Spleen (tissue), 13 donors: ENCODE measurements at regions of chr16 and their contacts with region 1.

Region 1: DNA sequence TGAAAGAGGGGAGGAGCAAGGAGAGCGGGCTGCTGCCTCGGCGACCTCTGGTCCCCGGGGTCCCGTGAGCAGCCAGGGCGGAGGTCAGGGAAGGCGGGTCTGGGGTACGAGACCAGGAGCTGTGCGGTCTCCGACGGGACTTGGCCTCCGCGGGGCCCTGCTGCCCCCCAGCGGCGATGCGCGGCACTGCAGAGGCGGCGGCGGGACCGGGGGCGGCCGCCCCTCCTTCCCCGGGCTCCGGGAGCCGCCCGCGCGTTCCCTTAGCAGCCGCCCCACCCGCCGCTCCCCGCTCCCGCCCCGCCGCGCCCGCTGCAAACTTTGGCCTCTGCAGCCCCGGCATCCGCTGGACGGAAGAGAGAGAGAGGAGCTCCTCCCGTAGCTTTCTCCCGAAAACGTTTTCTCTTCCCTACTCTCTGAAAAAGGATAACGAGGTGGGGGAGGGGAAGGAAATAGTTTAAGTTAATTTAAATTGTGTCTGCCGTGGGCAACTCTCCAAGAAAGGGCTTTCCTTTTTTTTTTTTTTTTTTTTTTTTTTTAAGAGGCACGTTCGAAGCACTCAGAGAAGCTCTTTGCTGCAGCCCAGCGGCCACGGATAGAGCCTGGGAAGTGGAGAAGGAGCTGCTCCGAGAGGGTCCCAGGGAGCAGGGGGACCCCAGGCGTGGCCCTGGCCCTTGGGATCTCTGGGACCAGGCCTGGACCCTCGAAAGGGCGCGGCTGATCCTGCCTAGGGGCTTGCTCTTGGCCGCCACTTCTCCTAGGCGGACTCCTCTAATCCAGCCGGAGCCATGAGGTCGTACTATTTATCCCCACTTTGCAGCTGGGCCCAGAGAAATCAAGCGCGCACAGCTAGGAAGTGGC is 43.2 kb downstream of the C16orf82 start:
- DNase-seq: peak; percentile 93
- H3K4me3 ChIP-seq: peak overlapping the region in 5 of 8 donors; percentile 3 to 63 (median 30)
- H3K27ac ChIP-seq: peak overlapping the region in 7 of 8 donors; percentile 29 to 68 (median 62)
- H3K4me1 ChIP-seq: peaks cover 9 to 57% (median 33%) of the 10 kb centered on the region in 6 donors
- H3K27me3 ChIP-seq: peaks cover 0 to 10% (median 0%) of the 10 kb centered on the region in 7 donors
- CTCF ChIP-seq: peak; percentile 34 to 99 (median 94)
- POLR2A ChIP-seq: no peak

Region 2: DNA sequence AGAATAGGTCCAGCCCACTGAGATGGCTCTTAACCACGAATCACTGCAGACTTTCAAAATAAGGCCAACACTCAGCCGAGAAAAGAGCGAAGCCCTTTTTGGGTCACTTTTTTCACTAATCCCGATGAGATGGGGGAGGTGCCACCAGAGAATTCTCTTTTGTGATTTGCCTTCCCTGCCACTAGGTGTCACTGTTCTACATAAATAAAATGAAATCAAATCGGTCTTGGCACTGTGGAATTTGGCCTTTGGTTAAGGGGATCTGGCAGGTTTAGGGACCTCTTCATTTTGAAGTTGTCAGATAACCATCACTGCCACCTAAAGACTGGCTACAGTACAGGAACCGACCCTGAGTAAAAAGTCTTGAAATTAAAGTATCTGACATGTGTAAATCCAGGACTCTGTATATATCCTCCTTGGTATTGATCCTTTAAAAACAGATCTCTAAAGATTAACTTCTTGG is 1271.1 kb before region 1 on chr16:
- intact Hi-C with region 1: loop called (anchors 10 kb)
- DNase-seq: no peak
- H3K4me3 ChIP-seq: no peak overlapping the region
- H3K27ac ChIP-seq: no peak overlapping the region
- H3K4me1 ChIP-seq: peaks cover 0 to 8% (median 6%) of the 10 kb centered on the region in 6 donors
- H3K27me3 ChIP-seq: peaks cover 0 to 30% (median 0%) of the 10 kb centered on the region in 7 donors
- CTCF ChIP-seq: peak; percentile 8 to 80 (median 63)
- POLR2A ChIP-seq: no peak

Region 3: DNA sequence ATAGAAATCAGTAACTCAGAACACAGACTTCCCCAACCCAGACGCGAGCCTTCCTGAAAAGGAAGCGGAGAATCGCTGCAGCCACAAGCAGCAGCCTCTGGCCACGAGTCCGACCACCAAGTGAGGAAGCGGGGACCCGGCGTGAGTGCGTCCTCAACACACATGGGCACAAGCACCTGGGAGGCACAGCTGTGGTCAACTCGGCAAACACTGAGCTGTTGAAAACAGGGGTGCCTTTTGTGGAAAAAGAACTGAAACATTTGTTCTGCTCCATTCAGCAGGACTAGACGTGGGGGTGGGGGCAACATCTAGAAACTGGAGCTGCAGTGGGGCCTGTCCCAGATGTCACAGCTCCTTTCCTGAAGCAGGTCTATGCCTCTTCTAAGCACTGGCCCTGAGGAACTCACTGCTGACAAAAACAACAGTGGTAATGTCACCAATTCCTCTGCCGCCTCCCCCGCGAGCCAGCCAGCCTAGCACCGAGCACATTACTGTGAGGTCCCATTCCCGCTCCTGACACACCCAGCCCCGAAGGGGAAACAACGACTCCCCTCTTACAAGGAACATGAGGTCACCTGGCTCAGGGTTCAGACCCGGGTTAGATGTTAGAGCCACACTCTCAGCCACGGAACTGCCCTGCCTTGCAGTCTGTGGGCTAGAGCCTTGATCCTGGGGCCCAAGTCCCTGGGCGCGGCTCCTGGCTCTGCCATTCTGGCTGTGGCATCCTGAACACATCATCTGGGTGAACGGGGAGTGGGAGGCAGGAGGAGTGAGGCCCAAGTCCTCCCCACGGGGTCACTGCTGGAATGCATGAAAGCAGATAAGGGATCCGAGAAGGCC is 122.4 kb after region 1 on chr16:
- intact Hi-C with region 1: no loop called
- DNase-seq: peak; percentile 87
- H3K4me3 ChIP-seq: peak overlapping the region in 1 of 8 donors; percentile 12
- H3K27ac ChIP-seq: peak overlapping the region; percentile 15 to 94 (median 76)
- H3K4me1 ChIP-seq: peaks cover 62 to 98% (median 84%) of the 10 kb centered on the region in 6 donors
- H3K27me3 ChIP-seq: no peaks in the 10 kb centered on the region
- CTCF ChIP-seq: no peak
- POLR2A ChIP-seq: no peak

Region 4: DNA sequence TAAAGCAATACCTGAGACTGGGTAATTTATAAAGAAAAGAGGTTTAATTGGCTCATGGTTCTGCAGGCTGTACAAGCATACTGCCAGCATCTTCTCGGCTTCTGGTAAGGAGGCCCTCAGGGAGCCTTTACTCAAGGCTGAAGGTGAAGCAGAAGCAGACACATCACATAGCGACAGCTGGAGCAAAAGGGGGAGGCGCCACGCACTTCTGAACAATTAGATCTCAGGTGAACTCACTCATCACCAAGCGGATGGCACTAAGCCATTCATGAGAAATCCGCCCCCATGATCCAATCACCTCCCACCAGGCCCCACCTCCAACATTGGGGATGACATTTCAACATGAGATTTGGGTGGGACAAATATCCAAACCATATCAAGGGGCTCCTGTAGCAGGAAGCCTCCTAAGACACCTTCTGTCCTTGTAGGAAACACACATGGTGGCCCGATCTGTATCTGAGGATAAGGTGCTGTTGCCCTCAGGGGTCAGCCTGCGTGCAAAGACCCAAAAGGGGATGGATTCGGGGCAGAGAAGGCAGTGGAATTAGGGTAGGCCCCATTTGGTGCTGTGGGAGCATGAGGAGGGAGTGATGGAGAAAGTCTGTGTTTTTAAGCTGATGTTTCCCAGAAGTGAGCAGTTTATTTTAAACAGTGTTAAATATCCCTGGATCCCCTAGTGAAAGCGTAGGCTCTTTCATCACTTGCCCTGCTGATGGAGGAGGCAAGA is 315.0 kb after region 1 on chr16:
- intact Hi-C with region 1: no loop called
- DNase-seq: peak; percentile 40
- H3K4me3 ChIP-seq: no peak overlapping the region
- H3K27ac ChIP-seq: no peak overlapping the region
- H3K4me1 ChIP-seq: peaks cover 3 to 60% (median 29%) of the 10 kb centered on the region in 6 donors
- H3K27me3 ChIP-seq: peaks cover 0 to 15% (median 0%) of the 10 kb centered on the region in 7 donors
- CTCF ChIP-seq: no peak
- POLR2A ChIP-seq: no peak